ENCODE measurements at regions of chr6 and their contacts with region 1.

Region 1: DNA sequence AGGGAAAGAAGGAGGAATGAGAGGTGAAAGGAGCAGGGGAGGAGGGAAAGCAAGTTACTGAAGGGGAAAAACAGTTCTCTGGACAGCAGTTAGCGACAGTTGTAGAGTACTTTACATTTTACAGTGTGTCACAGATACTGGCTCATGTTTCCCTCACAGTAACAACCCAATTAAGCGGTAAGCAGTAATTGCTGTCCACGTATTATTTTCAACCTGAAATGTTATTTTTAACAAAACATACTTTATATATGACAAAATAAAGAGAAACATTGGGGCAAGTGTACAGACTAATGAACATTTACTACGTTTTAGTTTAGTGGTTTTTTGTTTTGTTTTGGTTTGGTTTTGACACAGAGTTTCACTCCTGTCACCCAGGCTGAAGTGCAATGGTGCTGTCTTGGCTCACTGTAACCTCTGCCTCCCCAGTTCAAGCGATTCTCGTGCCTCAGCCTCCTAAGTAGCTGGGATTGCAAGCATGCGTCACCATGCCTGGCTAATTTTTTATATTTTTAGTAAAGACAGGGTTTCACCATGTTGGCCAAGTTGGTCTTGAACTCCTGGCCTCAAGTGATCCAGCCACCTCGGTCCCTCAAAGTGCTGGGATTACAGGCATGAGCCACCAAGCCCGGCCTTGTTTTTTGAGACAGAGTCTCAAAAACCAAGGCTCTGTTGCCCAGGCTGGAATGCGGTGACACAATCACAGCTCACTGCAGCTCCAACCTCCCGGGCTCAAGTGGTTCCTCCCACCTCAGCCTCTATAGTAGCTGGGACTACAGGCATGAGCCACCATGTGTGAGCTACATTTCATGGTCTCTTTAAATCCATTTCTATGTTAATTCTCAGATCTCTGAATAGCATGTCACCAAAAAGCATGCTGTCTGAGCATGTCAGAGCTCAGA is 22.6 kb upstream of the BTN3A2 start:
- DNase-seq: no peak
- H3K4me3 ChIP-seq: peak overlapping the region; percentile 16 to 48; a peak in 3 of 4 replicates
- H3K27ac ChIP-seq: no peak overlapping the region
- H3K4me1 ChIP-seq: no peaks in the 10 kb centered on the region
- H3K27me3 ChIP-seq: no peaks in the 10 kb centered on the region
- CTCF ChIP-seq: no peak
- EP300 ChIP-seq: no peak
- RAD21 ChIP-seq: no peak

Region 2: DNA sequence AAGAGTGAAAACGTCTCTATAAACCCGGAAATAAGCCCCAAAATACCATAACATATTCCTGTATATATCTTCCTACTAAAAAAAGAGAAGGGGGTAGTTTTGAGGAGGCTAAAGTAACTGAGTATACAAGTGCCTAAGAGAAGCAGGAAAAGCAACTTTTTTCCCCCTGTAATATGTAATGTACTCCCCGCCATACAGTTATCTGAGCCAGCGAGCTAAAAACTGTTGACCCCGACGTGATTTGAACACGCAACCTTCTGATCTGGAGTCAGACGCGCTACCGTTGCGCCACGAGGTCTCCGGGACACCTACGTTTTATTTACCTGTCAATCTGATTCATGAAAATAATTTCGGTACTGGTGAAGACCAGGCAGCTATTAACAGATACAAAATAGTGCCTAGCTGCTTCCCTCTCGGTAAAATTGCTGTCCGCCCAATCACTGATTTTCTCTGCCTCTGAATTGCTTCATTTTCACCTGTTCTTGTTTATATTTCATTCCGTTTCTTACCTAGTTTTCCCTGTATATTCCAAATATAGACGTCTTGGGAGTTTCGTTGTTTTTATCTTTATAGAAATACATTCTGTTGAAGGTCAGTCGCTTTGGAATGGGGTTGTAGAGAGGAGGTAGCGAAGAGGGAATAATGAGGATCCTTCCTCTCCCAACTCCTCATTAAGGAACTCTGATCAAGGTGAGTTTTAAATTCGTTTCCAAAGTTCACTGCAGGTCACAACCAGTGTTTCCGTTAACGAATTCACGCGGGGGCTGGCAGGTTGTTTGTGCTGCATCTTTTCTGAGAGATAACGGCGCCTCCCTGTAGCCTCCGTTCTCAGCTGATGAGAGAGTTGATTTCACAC is 10.9 kb before region 1 on chr6:
- CTCF ChIA-PET with region 1: interaction called, 34 read pairs
- POLR2A ChIA-PET with region 1: no interaction called
- DNase-seq: peak; percentile 9
- H3K4me3 ChIP-seq: peak overlapping the region; percentile 65 to 71
- H3K27ac ChIP-seq: no peak overlapping the region
- H3K4me1 ChIP-seq: peaks cover 2 to 7% of the 10 kb centered on the region in 2 experiments
- H3K27me3 ChIP-seq: no peaks in the 10 kb centered on the region
- CTCF ChIP-seq: no peak
- EP300 ChIP-seq: no peak
- RAD21 ChIP-seq: no peak

Region 3: DNA sequence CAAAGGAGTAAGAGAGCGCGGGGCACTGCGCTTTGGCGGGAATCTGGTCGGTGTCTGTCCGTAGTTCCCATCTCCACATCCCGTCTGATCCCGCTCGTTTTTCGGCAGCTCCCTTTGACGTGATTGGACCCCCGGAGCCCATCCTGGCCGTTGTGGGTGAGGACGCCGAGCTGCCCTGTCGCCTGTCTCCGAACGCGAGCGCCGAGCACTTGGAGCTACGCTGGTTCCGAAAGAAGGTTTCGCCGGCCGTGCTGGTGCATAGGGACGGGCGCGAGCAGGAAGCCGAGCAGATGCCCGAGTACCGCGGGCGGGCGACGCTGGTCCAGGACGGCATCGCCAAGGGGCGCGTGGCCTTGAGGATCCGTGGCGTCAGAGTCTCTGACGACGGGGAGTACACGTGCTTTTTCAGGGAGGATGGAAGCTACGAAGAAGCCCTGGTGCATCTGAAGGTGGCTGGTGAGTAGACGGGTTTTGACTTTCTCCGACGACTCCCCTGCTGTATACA is 159.2 kb after region 1 on chr6:
- CTCF ChIA-PET with region 1: interaction called, 19 read pairs
- POLR2A ChIA-PET with region 1: no interaction called
- DNase-seq: peak; percentile 69
- H3K4me3 ChIP-seq: peak overlapping the region; percentile 38 to 43; a peak in 3 of 4 replicates
- H3K27ac ChIP-seq: no peak overlapping the region
- H3K4me1 ChIP-seq: peaks cover 0 to 6% of the 10 kb centered on the region in 2 experiments; a peak in 1 of 4 replicates
- H3K27me3 ChIP-seq: peaks cover 14% of the 10 kb centered on the region
- CTCF ChIP-seq: no peak
- EP300 ChIP-seq: no peak
- RAD21 ChIP-seq: no peak

Region 4: DNA sequence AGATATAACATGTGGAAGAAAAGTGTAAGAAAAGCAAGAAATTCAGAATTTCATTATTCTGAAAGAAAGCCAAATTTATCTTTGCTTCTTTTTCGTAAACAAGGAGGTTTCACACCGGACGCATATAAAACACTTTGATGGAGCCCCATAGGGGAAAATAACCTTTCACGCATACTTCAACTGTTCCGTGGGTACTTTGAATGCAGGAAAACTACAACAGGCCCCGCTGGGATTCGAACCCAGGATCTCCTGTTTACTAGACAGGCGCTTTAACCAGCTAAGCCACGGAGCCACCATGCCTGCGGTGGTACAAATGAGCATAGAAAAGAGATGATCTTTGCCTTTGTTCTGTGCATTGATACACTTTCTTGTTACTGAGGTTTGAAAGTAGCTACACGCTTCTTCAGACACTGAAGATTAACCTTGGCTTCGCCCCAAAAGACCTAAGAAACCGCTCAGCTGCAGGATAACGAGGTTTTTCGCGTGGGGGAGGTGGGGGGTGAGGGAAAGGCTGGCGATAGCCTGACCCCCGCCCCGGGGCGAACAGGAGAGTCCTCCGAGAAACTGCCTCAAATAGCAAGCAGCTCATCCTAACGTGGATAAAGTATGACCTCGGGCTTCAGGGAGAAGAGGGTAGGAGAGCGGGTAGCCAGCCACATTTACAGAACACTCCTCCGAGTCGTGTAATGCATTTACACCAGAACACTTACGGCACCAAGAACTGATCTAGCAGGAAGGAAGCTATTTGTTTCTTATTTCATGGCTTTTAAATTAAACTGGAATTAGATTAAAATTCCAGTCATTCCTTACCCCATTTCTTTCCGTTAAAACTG is 190.6 kb after region 1 on chr6:
- CTCF ChIA-PET with region 1: interaction called, 21 read pairs
- POLR2A ChIA-PET with region 1: no interaction called
- DNase-seq: peak; percentile 74
- H3K4me3 ChIP-seq: peak overlapping the region; percentile 69 to 78
- H3K27ac ChIP-seq: peak overlapping the region; percentile 64 to 90
- H3K4me1 ChIP-seq: peaks cover 11 to 14% of the 10 kb centered on the region in 2 experiments
- H3K27me3 ChIP-seq: no peaks in the 10 kb centered on the region
- CTCF ChIP-seq: no peak
- EP300 ChIP-seq: peak in 1 of 2 experiments; percentile 24; a peak in 1 of 4 replicates
- RAD21 ChIP-seq: no peak

Region 5: GRCh38 chr6:26553635-26554446 is 211.5 kb after region 1 on chr6:
- CTCF ChIA-PET with region 1: interaction called, 24 read pairs
- POLR2A ChIA-PET with region 1: no interaction called
- DNase-seq: no peak
- H3K4me3 ChIP-seq: peak overlapping the region; percentile 68 to 84
- H3K27ac ChIP-seq: peak overlapping the region; percentile 83
- H3K4me1 ChIP-seq: peaks cover 0 to 3% of the 10 kb centered on the region in 2 experiments; a peak in 2 of 4 replicates
- H3K27me3 ChIP-seq: no peaks in the 10 kb centered on the region
- CTCF ChIP-seq: no peak
- EP300 ChIP-seq: no peak; a peak in 1 of 4 replicates
- RAD21 ChIP-seq: no peak

Region 6: GRCh38 chr6:26596579-26597388 is 254.4 kb after region 1 on chr6 and contains the start of gene ABT1:
- CTCF ChIA-PET with region 1: interaction called, 59 read pairs
- POLR2A ChIA-PET with region 1: no interaction called
- DNase-seq: peak; percentile 96
- H3K4me3 ChIP-seq: peak within 1 kb of the TSS; percentile 72 to 94
- H3K27ac ChIP-seq: peak within 1 kb of the TSS; percentile 89 to 90
- H3K4me1 ChIP-seq: peaks cover 5 to 15% of the 10 kb centered on the region in 2 experiments; a peak in 3 of 4 replicates
- H3K27me3 ChIP-seq: no peaks in the 10 kb centered on the region
- CTCF ChIP-seq: no peak
- EP300 ChIP-seq: no peak; a peak in 1 of 4 replicates
- RAD21 ChIP-seq: no peak
- polyA plus RNA-seq, gene ABT1: 15.4 and 18.4 TPM in 2 replicates